Sigmoid colon (tissue), 7 donors: ENCODE measurements at regions of chr10 and their contacts with region 1.

Region 1: GRCh38 chr10:113802997-113803396 is 50.9 kb downstream of the DCLRE1A start:
- DNase-seq: no peak
- H3K4me3 ChIP-seq: no peak overlapping the region
- H3K27ac ChIP-seq: peak overlapping the region in 1 of 4 donors; percentile 29
- H3K4me1 ChIP-seq: peaks cover 0 to 25% (median 13%) of the 10 kb centered on the region in 4 donors
- H3K27me3 ChIP-seq: no peaks in the 10 kb centered on the region
- CTCF ChIP-seq: no peak
- EP300 ChIP-seq: no peak
- POLR2A ChIP-seq: no peak

Region 2: GRCh38 chr10:114103284-114103683 is 300.3 kb after region 1 on chr10:
- intact Hi-C with region 1: loop called (anchors 2 kb)
- DNase-seq: no peak
- H3K4me3 ChIP-seq: no peak overlapping the region
- H3K27ac ChIP-seq: no peak overlapping the region
- H3K4me1 ChIP-seq: peaks cover 0 to 19% (median 13%) of the 10 kb centered on the region in 4 donors
- H3K27me3 ChIP-seq: peaks cover 0 to 11% (median 0%) of the 10 kb centered on the region in 3 donors
- CTCF ChIP-seq: peak; percentile 19 to 53 (median 44)
- EP300 ChIP-seq: no peak
- POLR2A ChIP-seq: no peak